ENCODE measurements at regions of chr11 and their contacts with region 1.

Region 1: DNA sequence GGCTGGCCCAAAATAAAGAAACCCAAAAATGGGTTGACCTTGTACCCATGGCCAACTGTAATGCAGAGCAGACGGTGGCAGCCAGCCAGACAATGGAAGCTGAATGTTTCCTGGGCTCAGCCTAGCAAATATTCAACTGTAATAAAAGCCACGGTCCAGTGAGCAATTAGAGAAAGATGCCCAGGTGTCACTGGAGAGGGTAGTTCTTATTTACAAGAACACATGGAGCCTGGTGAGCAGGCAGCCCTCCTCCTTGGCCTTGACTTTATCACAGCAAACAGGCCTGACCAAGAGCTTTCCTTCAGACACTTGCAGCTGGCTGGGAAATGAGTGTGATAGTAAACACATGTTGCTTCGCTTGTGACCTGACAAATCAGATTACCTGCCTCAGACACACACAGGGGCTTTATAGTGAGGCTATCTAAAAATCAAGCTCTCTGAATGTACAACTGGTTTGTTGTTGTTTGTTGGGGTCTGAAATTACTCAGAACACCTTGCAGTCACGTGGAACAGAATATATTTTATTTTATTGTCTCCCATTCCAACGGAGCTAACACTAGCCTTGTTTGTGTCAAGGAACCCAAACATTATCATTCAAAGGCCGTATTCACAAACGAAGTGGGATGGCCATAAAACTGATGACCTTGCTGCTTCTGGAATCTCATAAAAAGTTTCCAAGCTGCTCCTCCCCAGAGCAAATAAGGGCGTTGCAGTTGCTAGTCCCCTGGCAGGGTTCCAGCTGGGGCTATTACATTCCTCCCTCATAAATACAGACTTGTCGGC is 161.0 kb downstream of the BBOX1 start:
- DNase-seq: peak; percentile 41
- H3K4me3 ChIP-seq: no peak overlapping the region
- H3K27ac ChIP-seq: peak overlapping the region; percentile 21
- H3K4me1 ChIP-seq: peaks cover 12% of the 10 kb centered on the region
- CTCF ChIP-seq: no peak

Region 2: GRCh38 chr11:27153136-27153535 is 48.5 kb before region 1 on chr11:
- CTCF ChIA-PET with region 1: no interaction called
- POLR2A ChIA-PET with region 1: no interaction called
- intact Hi-C with region 1: no loop called
- DNase-seq: peak; percentile 11
- H3K4me3 ChIP-seq: no peak overlapping the region
- H3K27ac ChIP-seq: no peak overlapping the region
- H3K4me1 ChIP-seq: peaks cover 8% of the 10 kb centered on the region
- CTCF ChIP-seq: no peak

Region 3: GRCh38 chr11:27319072-27319471 is 117.4 kb after region 1 on chr11:
- CTCF ChIA-PET with region 1: no interaction called
- POLR2A ChIA-PET with region 1: no interaction called
- intact Hi-C with region 1: no loop called
- DNase-seq: no peak
- H3K4me3 ChIP-seq: no peak overlapping the region
- H3K27ac ChIP-seq: no peak overlapping the region
- H3K4me1 ChIP-seq: no peaks in the 10 kb centered on the region
- CTCF ChIP-seq: no peak

Region 4: GRCh38 chr11:27485930-27486773 is 284.5 kb after region 1 on chr11:
- CTCF ChIA-PET with region 1: no interaction called
- POLR2A ChIA-PET with region 1: interaction called, 3 read pairs
- intact Hi-C with region 1: loop called (anchors 5 kb)
- DNase-seq: peak; percentile 61
- H3K4me3 ChIP-seq: no peak overlapping the region
- H3K27ac ChIP-seq: no peak overlapping the region
- H3K4me1 ChIP-seq: no peaks in the 10 kb centered on the region
- CTCF ChIP-seq: peak; percentile 99

Measured in OCI-LY7 (cell line).